ENCODE measurements at regions of chr12 and their contacts with region 1.

Region 1: GRCh38 chr12:53274445-53274844 is 6.3 kb downstream of the ESPL1 start:
- DNase-seq: no peak
- H3K4me3 ChIP-seq: no peak overlapping the region
- CTCF ChIP-seq: no peak

Region 2: GRCh38 chr12:53287741-53288216 is 13.3 kb after region 1 on chr12:
- CTCF ChIA-PET with region 1: interaction called, 62 read pairs
- POLR2A ChIA-PET with region 1: interaction called, 3 read pairs
- DNase-seq: no peak
- H3K4me3 ChIP-seq: no peak overlapping the region
- CTCF ChIP-seq: peak; percentile 71

Region 3: GRCh38 chr12:53481957-53482586 is 207.6 kb after region 1 on chr12:
- CTCF ChIA-PET with region 1: no interaction called
- POLR2A ChIA-PET with region 1: no interaction called
- DNase-seq: no peak
- H3K4me3 ChIP-seq: no peak overlapping the region
- CTCF ChIP-seq: peak; percentile 12

Region 4: GRCh38 chr12:53722450-53723041 is 448.1 kb after region 1 on chr12:
- CTCF ChIA-PET with region 1: no interaction called
- POLR2A ChIA-PET with region 1: no interaction called
- DNase-seq: no peak
- H3K4me3 ChIP-seq: no peak overlapping the region
- CTCF ChIP-seq: no peak